Activated CD4-positive, alpha-beta T cell treated with anti-CD3 and anti-CD28 coated beads for 36 hours (primary cell): ENCODE measurements at regions of chr17 and their contacts with region 1.

Region 1: DNA sequence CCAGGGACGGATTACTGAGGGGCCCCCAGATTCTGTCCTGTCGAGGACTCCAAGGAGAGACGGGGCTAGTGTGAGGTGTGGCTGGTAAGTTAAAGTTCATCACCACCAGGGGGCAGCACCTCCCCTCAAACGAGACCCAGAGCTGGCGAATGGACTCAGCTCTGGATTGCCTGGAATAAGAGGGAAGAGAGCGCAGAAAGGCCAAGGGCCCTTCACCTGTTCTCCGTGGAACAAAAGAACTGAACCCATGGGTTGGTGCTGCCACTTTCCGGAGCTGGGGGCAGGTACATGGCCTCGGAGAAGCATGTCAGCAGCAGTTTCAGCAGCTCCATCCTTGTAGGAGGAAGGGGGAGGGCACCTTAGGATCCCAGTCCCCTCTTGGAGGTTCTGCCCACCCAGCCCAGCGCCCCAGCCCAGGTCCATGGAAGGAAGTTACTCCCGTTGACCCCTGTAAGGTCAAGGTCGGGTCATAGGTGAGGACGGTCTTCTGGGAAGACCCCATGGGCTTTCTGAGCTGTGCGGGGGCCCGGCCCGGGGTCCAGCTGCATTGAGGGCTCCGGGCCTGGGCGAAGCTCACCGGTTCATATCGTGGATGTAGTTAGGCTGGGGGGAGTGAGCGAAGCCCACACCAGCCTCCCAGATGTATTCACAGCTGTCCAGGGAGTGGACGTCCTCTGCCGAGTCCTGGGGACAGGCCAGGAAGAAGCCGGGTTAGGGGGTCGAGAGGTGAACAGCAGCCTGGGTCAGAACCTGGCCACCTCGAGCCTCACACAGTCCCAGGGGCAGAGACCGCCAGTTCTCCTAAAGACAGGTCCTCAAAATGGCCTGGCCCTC is 10.7 kb downstream of the HID1 start:
- DNase-seq: peak; percentile 92
- ATAC-seq: peak; percentile 79
- H3K4me3 Mint-ChIP-seq: no peak overlapping the region
- H3K27ac Mint-ChIP-seq: no peak overlapping the region
- H3K4me1 Mint-ChIP-seq: peaks cover 6% of the 10 kb centered on the region
- H3K27me3 Mint-ChIP-seq: no peaks in the 10 kb centered on the region

Region 2: GRCh38 chr17:74631468-74632450 is 330.1 kb before region 1 on chr17:
- CTCF ChIA-PET with region 1: no interaction called
- POLR2A ChIA-PET with region 1: no interaction called
- intact Hi-C with region 1: no loop called
- DNase-seq: no peak
- ATAC-seq: no peak
- H3K4me3 Mint-ChIP-seq: no peak overlapping the region
- H3K27ac Mint-ChIP-seq: no peak overlapping the region
- H3K4me1 Mint-ChIP-seq: peaks cover 6% of the 10 kb centered on the region
- H3K27me3 Mint-ChIP-seq: peaks cover 19% of the 10 kb centered on the region

Region 3: DNA sequence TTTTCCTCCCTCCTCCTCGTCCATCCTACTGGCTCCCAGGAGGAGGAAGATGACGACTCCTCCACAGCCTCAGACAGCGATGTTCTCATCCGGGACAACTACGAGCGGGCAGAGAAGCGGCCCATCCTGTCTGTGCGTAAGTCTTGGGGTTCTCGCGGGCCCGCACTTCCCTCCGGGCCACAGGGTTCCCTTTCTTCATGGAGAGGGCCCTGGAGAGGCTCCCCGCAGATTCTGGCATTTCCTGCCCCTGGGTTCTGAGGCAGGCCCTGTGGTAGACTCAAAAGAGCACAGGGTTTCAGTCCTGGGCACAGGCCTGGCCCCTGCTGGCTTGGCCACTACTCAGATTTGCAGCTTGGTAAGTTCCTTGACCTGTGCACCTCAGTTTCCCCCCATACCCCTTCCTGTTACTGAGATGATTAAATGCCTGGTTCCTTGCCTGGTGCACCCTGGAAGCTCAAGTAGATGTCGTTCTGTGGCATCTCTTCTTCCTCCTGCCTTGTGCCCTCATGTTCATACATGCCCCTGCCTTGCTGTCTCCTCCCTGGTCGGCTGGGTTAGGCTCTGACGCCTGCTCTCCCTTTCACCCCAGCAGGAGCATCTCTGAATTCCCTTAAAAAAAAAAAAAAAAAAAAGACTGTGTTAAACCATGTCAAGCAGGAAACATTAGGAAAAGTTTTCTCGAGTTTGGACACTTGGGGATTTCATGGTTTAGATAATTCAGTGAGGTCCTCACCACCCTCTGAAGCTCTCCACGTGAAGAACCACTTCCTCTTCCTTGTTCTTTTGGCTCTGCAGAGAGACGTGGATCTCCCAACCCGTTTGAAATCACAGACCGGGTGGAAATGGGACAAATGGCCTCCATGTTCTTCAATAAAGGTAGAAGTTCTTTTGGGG is 171.5 kb before region 1 on chr17:
- CTCF ChIA-PET with region 1: interaction called, 8 read pairs
- POLR2A ChIA-PET with region 1: no interaction called
- intact Hi-C with region 1: loop called (anchors 2 to 5 kb)
- DNase-seq: no peak
- ATAC-seq: no peak
- H3K4me3 Mint-ChIP-seq: no peak overlapping the region
- H3K27ac Mint-ChIP-seq: no peak overlapping the region
- H3K4me1 Mint-ChIP-seq: peaks cover 32% of the 10 kb centered on the region
- H3K27me3 Mint-ChIP-seq: no peaks in the 10 kb centered on the region

Region 4: GRCh38 chr17:74833501-74834377 is 128.1 kb before region 1 on chr17:
- CTCF ChIA-PET with region 1: no interaction called
- POLR2A ChIA-PET with region 1: no interaction called
- intact Hi-C with region 1: no loop called
- DNase-seq: no peak
- ATAC-seq: no peak
- H3K4me3 Mint-ChIP-seq: no peak overlapping the region
- H3K27ac Mint-ChIP-seq: no peak overlapping the region
- H3K4me1 Mint-ChIP-seq: no peaks in the 10 kb centered on the region
- H3K27me3 Mint-ChIP-seq: no peaks in the 10 kb centered on the region

Region 5: DNA sequence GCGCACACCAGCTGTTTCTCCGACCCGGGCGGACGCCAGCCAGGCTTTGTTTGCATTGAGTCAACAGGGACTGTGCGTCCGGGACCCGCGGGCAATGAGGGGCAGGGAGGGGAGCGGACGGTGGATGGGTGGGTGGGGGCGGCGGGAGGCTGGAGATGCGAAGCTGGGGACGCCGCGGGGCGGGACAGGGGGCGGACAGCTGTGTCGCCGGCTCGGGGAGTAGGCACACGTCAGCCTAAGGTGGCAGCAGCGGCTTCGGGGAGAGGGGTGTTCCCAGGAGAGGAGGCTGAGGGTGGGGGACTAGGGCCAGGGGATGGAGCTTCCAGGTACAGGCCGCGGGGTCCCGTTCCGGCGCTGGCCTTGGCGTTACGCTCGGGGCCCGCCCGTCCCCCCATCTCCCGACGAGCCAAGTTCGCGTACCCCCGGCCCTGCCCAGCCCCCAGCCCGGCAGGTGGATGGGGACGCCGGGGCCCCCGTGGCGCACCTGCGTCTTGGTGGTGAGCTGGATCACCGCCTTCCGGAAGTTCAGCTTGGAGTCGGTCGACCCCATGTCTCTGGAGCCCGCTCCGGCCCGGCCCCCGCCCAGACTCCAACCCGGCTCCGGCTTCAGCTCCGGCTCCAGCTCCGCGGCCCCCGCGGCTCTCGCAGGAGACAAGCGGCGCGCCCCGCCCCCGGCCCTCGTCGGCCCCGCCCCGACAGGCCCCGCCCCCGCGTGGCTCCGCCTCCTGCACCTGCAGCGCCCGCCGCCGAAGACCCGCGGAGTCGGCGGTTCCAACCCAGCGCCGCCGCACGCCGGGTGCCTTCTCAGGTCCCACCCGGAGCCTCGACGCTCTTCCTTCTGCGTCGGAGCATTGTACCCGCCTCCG is 10.5 kb after region 1 on chr17 and contains the start of gene HID1:
- CTCF ChIA-PET with region 1: interaction called, 82 read pairs
- POLR2A ChIA-PET with region 1: interaction called, 6 read pairs
- intact Hi-C with region 1: no loop called
- DNase-seq: peak; percentile 88
- ATAC-seq: peak; percentile 89
- H3K4me3 Mint-ChIP-seq: peak within 1 kb of the TSS; percentile 70
- H3K27ac Mint-ChIP-seq: no peak within 1 kb of the TSS
- H3K4me1 Mint-ChIP-seq: peaks cover 9% of the 10 kb centered on the region
- H3K27me3 Mint-ChIP-seq: peaks cover 7% of the 10 kb centered on the region
- total RNA-seq, gene HID1: 1.6 TPM

Region 6: DNA sequence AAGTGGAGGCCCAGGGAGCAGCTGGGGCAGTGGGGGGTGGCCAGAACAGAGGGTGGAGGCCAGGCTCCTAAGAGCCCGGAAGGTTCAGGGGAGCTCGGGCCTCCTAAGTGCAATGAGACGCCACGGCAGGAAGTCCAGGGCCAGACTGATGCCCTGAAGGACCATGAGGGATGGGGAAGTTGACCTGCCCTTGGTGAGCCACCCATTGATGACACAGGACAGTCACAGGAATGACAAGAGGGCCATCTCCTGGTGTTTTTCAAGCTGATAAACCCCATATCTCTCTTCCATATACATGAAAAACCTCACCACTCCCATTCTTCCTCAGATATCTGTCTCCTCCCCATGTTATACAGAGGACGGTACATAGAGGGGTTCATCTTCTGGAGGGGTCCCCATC is 44.8 kb after region 1 on chr17:
- CTCF ChIA-PET with region 1: interaction called, 52 read pairs
- POLR2A ChIA-PET with region 1: no interaction called
- intact Hi-C with region 1: loop called in 1 of 2 experiments (anchors 1 kb)
- DNase-seq: no peak
- ATAC-seq: no peak
- H3K4me3 Mint-ChIP-seq: no peak overlapping the region
- H3K27ac Mint-ChIP-seq: no peak overlapping the region
- H3K4me1 Mint-ChIP-seq: peaks cover 12% of the 10 kb centered on the region
- H3K27me3 Mint-ChIP-seq: no peaks in the 10 kb centered on the region

Region 7: GRCh38 chr17:75034236-75034908 is 72.5 kb after region 1 on chr17:
- CTCF ChIA-PET with region 1: interaction called, 6 read pairs
- POLR2A ChIA-PET with region 1: interaction called, 3 read pairs
- intact Hi-C with region 1: loop called (anchors 1 to 5 kb)
- DNase-seq: peak; percentile 96
- ATAC-seq: peak; percentile 65
- H3K4me3 Mint-ChIP-seq: peak overlapping the region; percentile 91
- H3K27ac Mint-ChIP-seq: peak overlapping the region; percentile 96
- H3K4me1 Mint-ChIP-seq: peaks cover 49% of the 10 kb centered on the region
- H3K27me3 Mint-ChIP-seq: no peaks in the 10 kb centered on the region

Region 8: DNA sequence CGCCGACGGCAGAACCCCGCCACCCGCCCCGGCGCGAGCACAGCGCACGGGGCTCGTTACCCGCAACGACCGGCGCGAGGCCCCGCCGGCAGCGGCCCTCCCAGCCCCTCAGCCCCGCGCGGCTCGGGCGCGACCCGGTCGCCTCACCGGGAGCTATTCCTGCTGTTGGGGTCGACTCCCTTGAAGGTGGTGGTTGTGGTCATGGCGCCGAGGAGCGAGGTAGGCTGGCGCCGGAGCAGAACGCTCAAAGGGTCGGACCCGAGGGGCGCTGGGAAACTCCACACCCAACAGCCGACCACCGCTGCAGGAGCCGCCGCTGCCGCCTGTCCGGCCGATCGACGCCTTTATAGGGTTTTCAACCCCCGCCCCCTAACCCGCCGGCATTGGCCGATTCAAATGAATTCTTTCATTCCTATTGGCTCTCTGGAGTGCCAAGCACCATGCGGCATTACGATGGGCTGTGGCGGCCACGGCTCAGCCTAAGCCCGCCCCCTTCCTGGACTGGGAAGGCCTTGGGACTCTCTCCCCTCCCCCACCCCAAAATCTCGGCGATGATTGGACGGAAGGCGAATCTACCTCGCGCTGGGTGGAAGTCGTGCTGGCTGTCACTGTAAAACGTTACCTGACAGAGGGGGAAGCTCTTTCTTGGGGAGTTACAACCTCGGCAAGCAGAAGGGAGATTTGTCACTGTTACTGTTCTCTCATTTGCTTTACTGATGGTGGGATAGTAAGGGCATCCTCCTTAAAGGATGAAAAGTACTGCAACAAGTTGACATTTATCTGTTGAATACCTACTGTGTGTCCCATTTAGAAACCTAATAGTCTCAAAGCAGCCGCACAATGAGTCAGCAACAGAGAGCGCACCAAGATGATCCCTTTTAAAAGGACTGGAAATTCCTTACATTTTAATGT is 192.6 kb after region 1 on chr17 and contains the start of gene JPT1:
- CTCF ChIA-PET with region 1: no interaction called
- POLR2A ChIA-PET with region 1: interaction called, 11 read pairs
- intact Hi-C with region 1: no loop called
- DNase-seq: peak; percentile 99
- ATAC-seq: peak; percentile 98
- H3K4me3 Mint-ChIP-seq: peak within 1 kb of the TSS; percentile 96
- H3K27ac Mint-ChIP-seq: peak within 1 kb of the TSS; percentile 89
- H3K4me1 Mint-ChIP-seq: peaks cover 36% of the 10 kb centered on the region
- H3K27me3 Mint-ChIP-seq: no peaks in the 10 kb centered on the region
- total RNA-seq, gene JPT1: 234 to 238 TPM

Region 9: GRCh38 chr17:75205037-75205792 is 243.3 kb after region 1 on chr17 and contains the start of gene NUP85:
- CTCF ChIA-PET with region 1: interaction called, 38 read pairs
- POLR2A ChIA-PET with region 1: interaction called, 8 read pairs
- intact Hi-C with region 1: loop called (anchors 1 to 5 kb)
- DNase-seq: peak; percentile 96
- ATAC-seq: peak; percentile 86
- H3K4me3 Mint-ChIP-seq: peak within 1 kb of the TSS; percentile 91
- H3K27ac Mint-ChIP-seq: peak within 1 kb of the TSS; percentile 100
- H3K4me1 Mint-ChIP-seq: peaks cover 18% of the 10 kb centered on the region
- H3K27me3 Mint-ChIP-seq: no peaks in the 10 kb centered on the region
- total RNA-seq, gene NUP85: 130 to 160 TPM